A673 (cell line): ENCODE measurements at regions of chr11 and their contacts with region 1.

Region 1: DNA sequence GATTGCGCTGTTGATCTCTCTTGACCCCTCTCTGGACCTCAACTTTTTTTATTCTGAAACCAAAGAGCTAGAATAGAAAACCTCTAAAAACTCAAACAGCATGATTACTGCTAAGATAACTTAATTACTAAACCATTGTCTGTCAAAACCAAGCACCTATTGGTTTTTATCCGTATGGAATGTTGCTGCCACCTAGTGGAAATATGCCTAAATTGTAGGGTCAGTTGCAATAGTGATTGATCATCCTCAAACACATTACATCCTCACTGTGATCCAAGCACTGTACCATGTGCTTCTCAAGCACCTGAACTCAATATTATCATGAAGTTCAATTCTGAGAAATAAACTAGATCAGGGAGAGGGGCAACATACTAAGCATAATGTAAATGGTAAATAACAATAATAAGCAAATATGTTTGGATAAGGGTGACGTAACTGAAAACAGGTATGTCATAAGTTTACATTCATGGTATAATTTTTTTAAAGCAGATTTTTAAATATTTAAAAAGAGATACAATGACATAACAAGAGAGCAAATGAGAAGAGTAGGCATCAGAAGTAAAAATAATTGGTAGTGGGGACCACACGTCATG is 3.8 kb upstream of the OR5A2 start:
- DNase-seq: peak; percentile 79
- H3K4me3 ChIP-seq: no peak overlapping the region
- H3K27ac ChIP-seq: no peak overlapping the region
- H3K4me1 ChIP-seq: peaks cover 16% of the 10 kb centered on the region
- H3K27me3 ChIP-seq: no peaks in the 10 kb centered on the region
- CTCF ChIP-seq: peak; percentile 92

Region 2: GRCh38 chr11:59207988-59208451 is 222.0 kb before region 1 on chr11:
- CTCF ChIA-PET with region 1: no interaction called
- POLR2A ChIA-PET with region 1: no interaction called
- intact Hi-C with region 1: loop called (anchors 1 kb)
- DNase-seq: peak; percentile 67
- H3K4me3 ChIP-seq: no peak overlapping the region
- H3K27ac ChIP-seq: no peak overlapping the region
- H3K4me1 ChIP-seq: no peaks in the 10 kb centered on the region
- H3K27me3 ChIP-seq: no peaks in the 10 kb centered on the region
- CTCF ChIP-seq: peak; percentile 83

Region 3: GRCh38 chr11:59216641-59217564 is 213.1 kb before region 1 on chr11:
- CTCF ChIA-PET with region 1: no interaction called
- POLR2A ChIA-PET with region 1: no interaction called
- intact Hi-C with region 1: loop called (anchors 5 kb)
- DNase-seq: no peak
- H3K4me3 ChIP-seq: no peak overlapping the region
- H3K27ac ChIP-seq: no peak overlapping the region
- H3K4me1 ChIP-seq: no peaks in the 10 kb centered on the region
- H3K27me3 ChIP-seq: peaks cover 6% of the 10 kb centered on the region
- CTCF ChIP-seq: no peak

Region 4: DNA sequence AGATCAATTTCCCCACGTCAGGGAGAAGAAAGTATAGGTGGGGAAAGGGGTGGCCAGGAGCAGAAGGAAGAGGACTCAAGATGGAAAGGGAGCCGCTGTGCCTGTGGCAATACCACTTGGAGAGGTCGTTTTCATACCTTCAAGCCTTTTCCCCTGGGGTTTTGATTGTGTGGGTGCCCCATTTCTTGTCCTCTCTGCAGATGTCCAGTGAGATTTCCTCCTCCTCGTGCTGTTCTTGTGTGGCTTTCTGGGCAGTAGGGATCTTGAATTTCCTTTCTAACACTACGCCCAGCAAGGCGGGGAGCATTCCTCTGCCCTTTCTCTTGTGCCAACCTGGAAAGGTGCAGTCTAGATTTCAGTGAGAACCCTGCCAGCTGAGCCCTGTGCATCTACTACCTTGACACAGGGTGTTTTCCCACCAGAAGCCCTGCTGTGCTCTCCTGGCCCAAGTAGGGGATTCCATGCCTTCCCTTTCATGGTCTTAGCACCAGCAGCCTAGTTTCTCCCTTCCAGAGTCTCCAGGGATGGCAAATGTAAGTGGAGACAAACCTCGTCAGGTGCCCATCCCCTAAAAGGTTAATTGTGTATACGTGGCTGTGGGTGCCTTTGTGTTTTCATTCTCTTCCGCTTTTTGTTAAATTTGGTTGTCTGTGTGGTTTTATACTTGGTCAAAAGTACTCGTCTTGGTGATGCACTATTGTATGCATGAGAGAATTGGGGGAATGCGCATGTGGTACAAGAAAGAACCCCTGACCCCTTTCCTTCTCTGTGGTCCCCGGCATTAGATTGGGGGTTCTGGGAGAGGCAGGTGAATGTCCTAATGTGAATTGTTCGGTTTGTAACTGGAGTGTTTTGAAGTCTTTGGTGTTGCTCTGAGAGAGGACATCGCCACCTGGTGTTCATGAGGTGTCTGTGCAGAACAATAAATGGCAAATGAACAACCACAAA is 145.9 kb before region 1 on chr11:
- CTCF ChIA-PET with region 1: no interaction called
- POLR2A ChIA-PET with region 1: no interaction called
- intact Hi-C with region 1: loop called (anchors 5 kb)
- DNase-seq: peak; percentile 56
- H3K4me3 ChIP-seq: no peak overlapping the region
- H3K27ac ChIP-seq: no peak overlapping the region
- H3K4me1 ChIP-seq: no peaks in the 10 kb centered on the region
- H3K27me3 ChIP-seq: peaks cover 7% of the 10 kb centered on the region
- CTCF ChIP-seq: peak; percentile 89

Region 5: DNA sequence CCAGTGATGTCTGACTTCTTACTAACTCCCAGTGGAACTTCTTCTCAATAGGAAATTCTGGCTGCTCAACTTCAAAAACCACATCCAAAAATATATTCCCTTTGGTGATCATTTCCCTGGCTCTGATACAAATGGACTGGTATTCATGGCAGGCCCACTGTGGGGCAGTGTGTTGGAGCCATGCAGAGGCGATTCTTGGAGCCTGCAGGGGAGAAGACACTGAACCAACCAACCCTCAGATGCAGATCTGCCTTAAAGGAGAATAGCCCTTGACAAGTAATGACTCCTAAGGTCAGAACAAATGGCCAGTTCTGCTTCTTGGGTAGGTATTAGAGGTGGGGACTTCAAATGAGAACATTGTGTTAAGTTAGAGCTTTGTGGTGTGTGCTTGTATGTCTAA is 93.5 kb after region 1 on chr11:
- CTCF ChIA-PET with region 1: no interaction called
- POLR2A ChIA-PET with region 1: no interaction called
- intact Hi-C with region 1: no loop called
- DNase-seq: no peak
- H3K4me3 ChIP-seq: no peak overlapping the region
- H3K27ac ChIP-seq: no peak overlapping the region
- H3K4me1 ChIP-seq: no peaks in the 10 kb centered on the region
- H3K27me3 ChIP-seq: no peaks in the 10 kb centered on the region
- CTCF ChIP-seq: peak; percentile 26; the same call in 1 of the 2 replicates